ENCODE measurements at regions of chr1 and their contacts with region 1.

Region 1: DNA sequence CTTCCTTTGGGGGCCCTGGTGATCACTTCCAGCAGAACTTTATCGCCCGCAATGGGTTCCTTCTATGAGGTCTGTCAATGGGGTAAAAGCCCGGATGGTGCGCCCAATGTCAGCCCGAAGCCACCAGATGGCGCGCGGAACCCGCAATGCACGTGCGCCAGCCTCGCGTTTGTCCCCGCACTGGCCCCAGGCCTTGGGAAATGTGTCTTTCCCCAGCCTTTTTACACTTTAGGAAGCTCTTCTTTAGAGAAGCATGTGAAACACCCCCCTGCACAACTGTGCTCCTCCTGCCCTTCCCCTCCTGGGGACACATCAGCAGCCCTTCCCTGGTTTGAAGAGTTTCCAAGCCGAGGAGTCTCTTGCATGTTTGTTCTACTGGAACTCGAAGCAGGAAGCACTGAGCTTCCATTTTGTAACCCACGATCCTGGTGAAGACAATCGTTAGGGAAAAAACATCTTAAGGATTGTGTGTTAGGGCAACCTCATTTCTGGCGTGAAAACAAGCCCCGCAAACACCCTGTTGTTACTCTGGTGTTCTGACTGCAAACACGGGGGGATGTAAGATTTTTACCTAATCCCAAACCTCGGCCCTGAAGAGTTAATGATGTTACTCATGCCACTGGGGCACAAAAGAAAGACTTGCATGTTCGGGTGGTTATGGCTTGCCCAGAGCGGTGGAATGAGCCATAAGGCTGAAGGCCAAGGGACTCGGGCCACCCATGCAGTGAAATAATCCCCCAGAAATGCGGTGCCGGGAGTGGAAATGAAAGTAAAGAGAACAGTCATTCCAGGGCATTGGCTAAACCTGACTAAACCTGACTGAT is 20.4 kb upstream of the TARBP1 start:
- DNase-seq: peak; percentile 88 to 95 (median 93)
- H3K4me3 ChIP-seq: peak overlapping the region; percentile 2
- H3K27ac ChIP-seq: peak overlapping the region; percentile 58 to 74
- H3K4me1 ChIP-seq: peaks cover 8% of the 10 kb centered on the region
- H3K27me3 ChIP-seq: no peaks in the 10 kb centered on the region
- CTCF ChIP-seq: peak; percentile 86 to 98 (median 93)
- EP300 ChIP-seq: no peak
- POLR2A ChIP-seq: peak; percentile 35

Region 2: GRCh38 chr1:234433563-234434285 is 65.6 kb before region 1 on chr1:
- intact Hi-C with region 1: no loop called
- DNase-seq: no peak
- H3K4me3 ChIP-seq: no peak overlapping the region
- H3K27ac ChIP-seq: no peak overlapping the region
- H3K4me1 ChIP-seq: no peaks in the 10 kb centered on the region
- H3K27me3 ChIP-seq: no peaks in the 10 kb centered on the region
- CTCF ChIP-seq: no peak
- EP300 ChIP-seq: no peak
- POLR2A ChIP-seq: no peak

Region 3: DNA sequence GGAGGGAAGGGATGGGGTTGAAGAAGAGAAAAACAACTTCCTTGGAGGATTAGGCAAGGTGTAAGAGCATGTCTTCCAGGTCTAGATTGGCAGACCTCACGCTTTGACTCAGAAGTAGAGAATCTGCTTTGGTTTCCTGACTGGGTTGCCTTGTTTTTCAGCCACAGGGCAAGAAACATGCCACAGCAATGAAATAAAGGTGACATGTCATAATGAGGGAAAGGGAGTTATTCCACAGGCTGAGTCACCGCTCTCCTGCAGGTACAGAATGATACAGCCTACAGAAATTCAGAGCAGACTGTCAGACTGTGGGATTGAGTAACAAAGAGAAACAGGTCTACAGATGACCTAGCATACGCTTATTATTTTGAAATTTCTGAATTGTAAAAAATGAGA is 65.3 kb after region 1 on chr1:
- intact Hi-C with region 1: no loop called
- DNase-seq: no peak
- H3K4me3 ChIP-seq: no peak overlapping the region
- H3K27ac ChIP-seq: no peak overlapping the region
- H3K4me1 ChIP-seq: peaks cover 6% of the 10 kb centered on the region
- H3K27me3 ChIP-seq: no peaks in the 10 kb centered on the region
- CTCF ChIP-seq: no peak
- EP300 ChIP-seq: no peak
- POLR2A ChIP-seq: no peak

Region 4: DNA sequence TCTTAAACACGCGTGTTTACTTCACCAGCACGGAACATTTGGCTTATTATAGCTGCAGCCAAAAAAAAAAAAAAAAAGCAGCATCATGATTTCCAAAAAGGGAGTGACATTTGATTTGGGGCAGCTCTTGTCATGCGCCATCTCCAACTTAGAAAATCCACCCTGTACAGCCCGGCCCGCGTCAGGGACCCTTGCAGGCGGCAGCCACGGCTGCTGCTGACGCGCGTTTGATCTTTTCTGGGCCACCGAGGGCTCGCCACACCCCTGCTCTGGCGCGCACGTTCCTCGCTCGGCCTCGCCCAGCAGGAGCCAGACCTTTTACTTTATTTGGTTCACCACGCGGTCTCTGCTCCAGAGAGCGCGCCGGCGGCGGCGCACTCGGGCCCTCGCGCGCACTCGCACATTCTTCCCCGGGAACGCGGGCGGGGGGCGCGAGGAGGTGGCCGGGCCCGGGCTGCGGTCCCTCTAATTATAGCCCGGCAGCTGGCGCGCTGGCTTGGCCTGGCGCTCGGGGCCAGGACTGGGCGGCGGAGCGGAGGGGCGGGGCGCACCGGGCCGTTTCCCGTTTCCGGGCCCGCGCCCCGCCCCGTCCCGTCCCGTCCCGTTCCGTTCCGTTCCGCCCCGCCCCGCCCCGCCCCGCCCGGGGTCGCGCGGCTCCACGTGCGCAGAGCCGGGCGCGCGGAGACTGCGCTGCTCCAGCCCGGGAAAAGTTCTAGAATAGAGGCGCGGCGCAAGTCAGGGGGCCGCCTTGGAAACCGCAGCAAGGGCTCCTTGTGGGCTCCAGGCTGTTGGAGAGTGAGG is 100.5 kb after region 1 on chr1:
- intact Hi-C with region 1: loop called in 1 of 4 experiments (anchors 10 kb)
- DNase-seq: peak; percentile 85 to 92 (median 88)
- H3K4me3 ChIP-seq: peak overlapping the region; percentile 51
- H3K27ac ChIP-seq: peak overlapping the region; percentile 82 to 97
- H3K4me1 ChIP-seq: peaks cover 3% of the 10 kb centered on the region
- H3K27me3 ChIP-seq: no peaks in the 10 kb centered on the region
- CTCF ChIP-seq: peak in 1 of 3 donors; percentile 23
- EP300 ChIP-seq: peak; percentile 75
- POLR2A ChIP-seq: peak; percentile 57

Region 5: DNA sequence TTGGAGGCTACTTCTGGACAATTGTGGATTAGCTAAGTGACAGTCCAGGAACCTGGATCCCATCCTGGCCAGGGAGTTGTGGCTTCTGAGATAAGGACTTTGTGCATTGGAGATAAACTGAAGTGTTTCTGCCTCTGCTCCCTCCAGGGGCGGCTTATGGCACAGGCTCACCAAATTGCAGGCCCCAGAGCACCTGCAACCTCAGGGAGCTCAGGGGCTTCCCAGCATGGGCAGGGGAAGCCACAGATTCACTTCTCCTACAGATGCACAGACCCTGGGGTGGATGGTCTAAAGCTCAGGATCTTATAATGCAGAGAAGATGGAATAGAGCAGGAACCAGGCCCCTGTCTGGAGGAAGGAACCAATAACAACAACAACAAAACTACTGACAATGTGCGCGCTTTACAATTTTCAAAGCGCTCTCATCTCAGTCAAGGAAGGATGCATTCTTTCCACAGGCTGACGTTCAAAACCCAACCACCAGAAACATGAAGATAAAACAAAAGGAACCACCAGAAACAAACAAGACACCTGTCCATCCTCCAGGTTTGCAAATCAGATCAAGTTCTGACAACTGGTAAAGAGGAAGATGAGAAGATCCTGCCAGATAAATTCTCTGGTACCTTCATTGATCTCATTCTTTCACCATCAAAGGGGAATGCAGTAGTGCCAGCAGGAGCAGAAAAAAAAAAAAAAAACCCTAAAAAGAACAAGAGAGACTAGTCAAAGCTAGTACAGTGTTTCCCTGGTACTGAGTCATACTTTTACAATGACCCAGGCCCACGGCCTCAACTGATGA is 231.6 kb after region 1 on chr1:
- intact Hi-C with region 1: loop called in 2 of 4 experiments (anchors 10 kb)
- DNase-seq: peak in 1 of 5 donors; percentile 10
- H3K4me3 ChIP-seq: no peak overlapping the region
- H3K27ac ChIP-seq: no peak overlapping the region
- H3K4me1 ChIP-seq: peaks cover 19% of the 10 kb centered on the region
- H3K27me3 ChIP-seq: no peaks in the 10 kb centered on the region
- CTCF ChIP-seq: no peak
- EP300 ChIP-seq: no peak
- POLR2A ChIP-seq: no peak

Region 6: GRCh38 chr1:235075188-235075926 is 576.0 kb after region 1 on chr1:
- intact Hi-C with region 1: loop called in 1 of 4 experiments (anchors 5 kb)
- DNase-seq: peak; percentile 69 to 79 (median 73)
- H3K4me3 ChIP-seq: no peak overlapping the region
- H3K27ac ChIP-seq: peak overlapping the region; percentile 32 to 68
- H3K4me1 ChIP-seq: peaks cover 11% of the 10 kb centered on the region
- H3K27me3 ChIP-seq: no peaks in the 10 kb centered on the region
- CTCF ChIP-seq: no peak
- EP300 ChIP-seq: peak; percentile 45
- POLR2A ChIP-seq: no peak

Measured in ovary (tissue), 10 donors.